Activated CD8-positive, alpha-beta T cell treated with anti-CD3 and anti-CD28 coated beads for 36 hours (primary cell): ENCODE measurements at regions of chr2 and their contacts with region 1.

Region 1: GRCh38 chr2:69914170-69914960 is 544 bp upstream of the MXD1 start:
- DNase-seq: peak; percentile 100
- ATAC-seq: peak; percentile 96
- H3K4me3 Mint-ChIP-seq: peak overlapping the region; percentile 86
- H3K27ac Mint-ChIP-seq: peak overlapping the region; percentile 92
- H3K4me1 Mint-ChIP-seq: peaks cover 37% of the 10 kb centered on the region
- H3K27me3 Mint-ChIP-seq: no peaks in the 10 kb centered on the region
- CTCF ChIP-seq: no peak

Region 2: DNA sequence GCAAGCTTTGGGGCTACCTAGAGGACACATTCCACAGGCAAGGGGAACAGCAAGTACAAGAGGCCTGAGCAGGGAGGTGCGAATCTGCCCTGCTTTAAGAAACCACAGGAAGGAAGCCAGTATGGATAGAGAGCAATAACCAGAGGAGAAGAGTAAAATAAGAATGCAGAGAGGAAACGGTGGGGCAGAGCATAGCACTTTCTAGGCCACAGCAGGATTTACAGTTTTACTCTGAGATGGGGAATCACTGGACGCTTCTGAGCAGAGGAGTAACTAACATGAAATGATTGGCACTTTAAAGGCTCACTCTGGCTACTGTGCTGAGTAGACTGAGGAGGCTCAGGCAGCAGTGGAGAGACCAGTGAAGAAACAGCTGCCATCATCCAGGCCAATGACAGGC is 294.6 kb before region 1 on chr2:
- CTCF ChIA-PET with region 1: no interaction called
- POLR2A ChIA-PET with region 1: no interaction called
- intact Hi-C with region 1: no loop called
- DNase-seq: peak; percentile 37
- ATAC-seq: peak; percentile 64
- H3K4me3 Mint-ChIP-seq: no peak overlapping the region
- H3K27ac Mint-ChIP-seq: no peak overlapping the region
- H3K4me1 Mint-ChIP-seq: peaks cover 31% of the 10 kb centered on the region
- H3K27me3 Mint-ChIP-seq: no peaks in the 10 kb centered on the region
- CTCF ChIP-seq: no peak

Region 3: GRCh38 chr2:69643602-69644505 is 270.5 kb before region 1 on chr2 and contains the start of gene AAK1:
- CTCF ChIA-PET with region 1: no interaction called
- POLR2A ChIA-PET with region 1: no interaction called
- intact Hi-C with region 1: no loop called
- DNase-seq: peak; percentile 91
- ATAC-seq: peak; percentile 58
- H3K4me3 Mint-ChIP-seq: peak within 1 kb of the TSS; percentile 85
- H3K27ac Mint-ChIP-seq: peak within 1 kb of the TSS; percentile 96
- H3K4me1 Mint-ChIP-seq: peaks cover 50% of the 10 kb centered on the region
- H3K27me3 Mint-ChIP-seq: no peaks in the 10 kb centered on the region
- CTCF ChIP-seq: no peak
- total RNA-seq, gene AAK1: 114 to 115 TPM

Region 4: DNA sequence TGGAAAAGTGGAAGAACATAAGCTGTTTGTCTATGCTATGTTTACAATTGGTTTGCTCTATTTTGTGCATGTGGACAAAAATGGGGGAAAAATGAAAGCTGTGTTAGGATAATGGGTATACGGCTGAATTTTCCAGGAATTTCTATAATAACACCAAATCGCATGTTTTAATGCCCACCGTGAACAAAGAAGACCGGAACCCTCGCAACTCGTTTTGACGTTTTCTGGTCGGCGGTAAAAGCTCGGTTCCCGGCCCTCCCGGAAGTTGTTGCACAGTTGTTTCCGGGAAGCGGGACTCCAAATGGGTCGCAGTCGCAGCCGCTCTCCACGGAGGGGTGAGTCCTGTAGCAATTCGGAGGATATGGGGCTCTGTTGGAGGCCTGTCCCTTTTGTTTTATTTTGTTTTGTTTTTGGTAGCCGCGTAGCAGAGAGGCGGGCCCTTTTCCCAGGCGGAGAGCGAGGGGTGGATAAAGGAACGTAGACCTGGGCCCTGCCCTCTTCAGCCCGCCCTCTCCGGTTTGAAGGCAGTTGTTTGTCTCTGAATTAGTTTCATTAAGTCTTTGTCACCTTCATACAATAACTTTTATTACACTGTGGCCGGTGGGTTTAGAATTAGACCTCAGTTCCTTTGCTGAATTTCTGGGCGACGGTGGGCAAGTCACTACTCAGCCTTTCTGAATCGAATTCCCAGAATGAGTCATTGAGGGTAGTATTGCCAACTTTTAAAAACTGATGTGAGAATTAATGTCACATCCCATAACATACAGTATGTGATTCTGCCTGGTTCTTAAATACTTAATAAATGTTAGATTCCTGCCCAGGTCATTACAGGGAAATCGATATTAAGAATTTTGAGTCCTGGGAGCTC is 20.4 kb before region 1 on chr2 and contains the start of gene SNRNP27:
- CTCF ChIA-PET with region 1: interaction called, 42 read pairs
- POLR2A ChIA-PET with region 1: interaction called, 29 read pairs
- intact Hi-C with region 1: no loop called
- DNase-seq: peak; percentile 87
- ATAC-seq: peak; percentile 92
- H3K4me3 Mint-ChIP-seq: peak within 1 kb of the TSS; percentile 99
- H3K27ac Mint-ChIP-seq: peak within 1 kb of the TSS; percentile 98
- H3K4me1 Mint-ChIP-seq: peaks cover 34% of the 10 kb centered on the region
- H3K27me3 Mint-ChIP-seq: no peaks in the 10 kb centered on the region
- CTCF ChIP-seq: no peak
- total RNA-seq, gene SNRNP27: 54.3 to 57.9 TPM

Region 5: DNA sequence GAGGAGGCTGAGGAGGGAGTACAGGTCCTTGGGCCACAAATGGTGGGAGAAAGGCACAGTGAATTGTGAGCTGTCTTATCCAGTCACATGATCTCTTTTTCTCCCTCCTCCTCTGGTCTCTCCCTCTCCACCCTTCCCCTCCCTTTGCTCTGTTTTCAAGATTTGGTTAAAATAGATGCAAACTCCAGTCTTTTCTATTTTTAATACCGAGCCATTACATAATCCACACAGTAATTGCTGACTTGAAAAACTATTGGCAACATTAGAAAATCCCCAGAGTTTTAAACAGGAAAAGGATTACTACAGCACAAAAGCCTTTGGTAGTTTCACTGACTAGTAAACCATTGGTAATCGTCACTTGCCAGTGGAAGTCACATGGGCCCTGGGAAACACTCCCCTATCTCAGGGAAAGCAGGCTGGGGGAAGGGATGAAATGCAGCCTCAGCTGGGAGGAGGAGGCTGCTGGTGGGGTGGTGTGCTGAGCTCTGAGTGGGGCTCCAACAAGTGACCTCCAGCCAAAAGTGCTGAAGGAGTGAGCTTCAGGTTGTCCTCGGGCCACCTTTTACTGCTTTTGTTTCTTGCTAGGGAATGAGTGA is 115.5 kb after region 1 on chr2:
- CTCF ChIA-PET with region 1: no interaction called
- POLR2A ChIA-PET with region 1: no interaction called
- intact Hi-C with region 1: no loop called
- DNase-seq: no peak
- ATAC-seq: no peak
- H3K4me3 Mint-ChIP-seq: no peak overlapping the region
- H3K27ac Mint-ChIP-seq: no peak overlapping the region
- H3K4me1 Mint-ChIP-seq: peaks cover 7% of the 10 kb centered on the region
- H3K27me3 Mint-ChIP-seq: no peaks in the 10 kb centered on the region
- CTCF ChIP-seq: no peak

Region 6: DNA sequence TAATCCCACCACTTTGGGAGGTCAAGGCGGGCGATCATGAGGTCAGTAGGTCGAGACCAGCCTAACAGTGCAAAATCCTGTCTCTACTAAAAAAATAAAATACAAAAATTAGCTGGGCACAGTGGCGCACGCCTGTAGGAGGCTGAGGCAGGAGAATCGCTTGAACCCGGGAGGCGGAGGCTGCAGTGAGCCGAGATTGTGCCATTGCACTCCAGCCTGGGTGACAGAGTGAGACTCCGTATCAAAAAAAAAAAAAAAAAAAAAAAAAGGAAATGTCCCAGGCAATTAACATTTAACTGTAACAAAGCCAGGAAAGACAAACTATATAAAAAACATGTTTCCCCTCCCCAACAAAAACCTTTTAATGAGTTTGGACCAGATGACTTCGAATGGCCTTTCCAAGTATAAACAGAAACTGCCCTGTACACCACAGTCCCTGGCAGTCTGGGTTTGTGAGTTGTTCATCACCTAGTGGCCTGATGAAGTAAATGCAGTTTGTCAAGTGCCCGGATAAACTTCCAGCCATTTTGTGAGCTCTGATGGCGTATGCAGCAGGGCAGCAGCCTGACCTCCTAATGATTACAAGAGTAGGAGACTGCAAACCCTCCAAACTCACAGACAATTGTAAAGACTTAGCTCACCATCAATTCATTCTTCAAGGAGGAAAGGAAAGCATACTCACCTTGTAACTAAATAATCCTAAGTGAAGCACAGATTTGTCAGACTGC is 156.3 kb after region 1 on chr2:
- CTCF ChIA-PET with region 1: interaction called, 58 read pairs
- POLR2A ChIA-PET with region 1: interaction called, 23 read pairs
- intact Hi-C with region 1: loop called (anchors 5 kb)
- DNase-seq: peak; percentile 74
- ATAC-seq: peak; percentile 72
- H3K4me3 Mint-ChIP-seq: peak overlapping the region; percentile 40
- H3K27ac Mint-ChIP-seq: peak overlapping the region; percentile 87
- H3K4me1 Mint-ChIP-seq: peaks cover 44% of the 10 kb centered on the region
- H3K27me3 Mint-ChIP-seq: no peaks in the 10 kb centered on the region
- CTCF ChIP-seq: peak; percentile 67

Region 7: DNA sequence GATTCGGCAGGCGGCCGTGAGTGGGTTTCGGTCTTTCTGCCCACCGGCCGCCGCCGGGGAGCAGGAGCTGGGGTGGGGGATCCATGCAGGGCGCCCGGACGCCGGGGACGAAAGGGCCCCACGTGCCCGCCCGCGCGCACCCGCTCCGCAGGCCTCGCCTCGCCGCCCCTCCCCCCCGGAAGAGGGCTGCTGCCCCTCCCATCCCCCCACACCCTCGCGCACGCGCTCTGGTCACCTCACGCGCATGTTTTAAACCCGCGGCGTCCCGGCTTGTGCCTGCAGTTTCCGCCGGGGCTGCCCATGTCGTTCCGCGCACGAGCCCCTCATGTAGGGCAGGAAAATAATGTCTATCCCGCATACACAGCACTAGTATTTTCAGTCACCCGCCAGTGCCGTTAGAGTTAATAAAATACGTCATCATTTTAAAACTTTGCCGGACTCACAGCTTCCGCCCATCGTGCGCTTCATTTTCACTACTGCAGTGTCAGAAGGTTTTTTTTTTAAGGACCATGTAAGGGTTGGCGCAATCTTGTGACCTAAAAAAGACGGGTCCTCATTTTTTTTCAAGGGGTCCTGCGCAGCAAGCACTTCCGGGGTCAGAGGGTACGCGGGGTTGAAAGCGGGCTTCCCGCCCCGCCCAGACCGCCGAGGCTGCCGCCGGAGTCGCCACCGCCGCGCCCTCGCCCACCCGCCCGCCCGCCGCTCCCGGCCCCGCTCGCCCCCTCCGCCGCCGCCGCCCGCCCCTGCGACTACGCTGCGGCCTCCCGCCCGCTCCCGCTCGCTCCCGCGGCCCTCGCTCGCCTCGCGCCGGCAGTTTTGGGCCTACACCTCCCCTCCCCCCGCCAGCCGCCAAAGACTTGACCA is 172.7 kb after region 1 on chr2 and contains the start of gene PCBP1:
- CTCF ChIA-PET with region 1: interaction called, 11 read pairs
- POLR2A ChIA-PET with region 1: interaction called, 57 read pairs
- intact Hi-C with region 1: loop called (anchors 5 kb)
- DNase-seq: peak; percentile 96
- ATAC-seq: peak; percentile 60
- H3K4me3 Mint-ChIP-seq: peak within 1 kb of the TSS; percentile 99
- H3K27ac Mint-ChIP-seq: peak within 1 kb of the TSS; percentile 98
- H3K4me1 Mint-ChIP-seq: peaks cover 53% of the 10 kb centered on the region
- H3K27me3 Mint-ChIP-seq: no peaks in the 10 kb centered on the region
- CTCF ChIP-seq: no peak
- total RNA-seq, gene PCBP1: 470 to 489 TPM

Region 8: GRCh38 chr2:70132244-70133126 is 218.1 kb after region 1 on chr2:
- CTCF ChIA-PET with region 1: interaction called, 15 read pairs
- POLR2A ChIA-PET with region 1: interaction called, 25 read pairs
- intact Hi-C with region 1: no loop called
- DNase-seq: peak; percentile 65
- ATAC-seq: peak; percentile 46
- H3K4me3 Mint-ChIP-seq: peak overlapping the region; percentile 86
- H3K27ac Mint-ChIP-seq: peak overlapping the region; percentile 99
- H3K4me1 Mint-ChIP-seq: peaks cover 61% of the 10 kb centered on the region
- H3K27me3 Mint-ChIP-seq: no peaks in the 10 kb centered on the region
- CTCF ChIP-seq: no peak

Region 9: DNA sequence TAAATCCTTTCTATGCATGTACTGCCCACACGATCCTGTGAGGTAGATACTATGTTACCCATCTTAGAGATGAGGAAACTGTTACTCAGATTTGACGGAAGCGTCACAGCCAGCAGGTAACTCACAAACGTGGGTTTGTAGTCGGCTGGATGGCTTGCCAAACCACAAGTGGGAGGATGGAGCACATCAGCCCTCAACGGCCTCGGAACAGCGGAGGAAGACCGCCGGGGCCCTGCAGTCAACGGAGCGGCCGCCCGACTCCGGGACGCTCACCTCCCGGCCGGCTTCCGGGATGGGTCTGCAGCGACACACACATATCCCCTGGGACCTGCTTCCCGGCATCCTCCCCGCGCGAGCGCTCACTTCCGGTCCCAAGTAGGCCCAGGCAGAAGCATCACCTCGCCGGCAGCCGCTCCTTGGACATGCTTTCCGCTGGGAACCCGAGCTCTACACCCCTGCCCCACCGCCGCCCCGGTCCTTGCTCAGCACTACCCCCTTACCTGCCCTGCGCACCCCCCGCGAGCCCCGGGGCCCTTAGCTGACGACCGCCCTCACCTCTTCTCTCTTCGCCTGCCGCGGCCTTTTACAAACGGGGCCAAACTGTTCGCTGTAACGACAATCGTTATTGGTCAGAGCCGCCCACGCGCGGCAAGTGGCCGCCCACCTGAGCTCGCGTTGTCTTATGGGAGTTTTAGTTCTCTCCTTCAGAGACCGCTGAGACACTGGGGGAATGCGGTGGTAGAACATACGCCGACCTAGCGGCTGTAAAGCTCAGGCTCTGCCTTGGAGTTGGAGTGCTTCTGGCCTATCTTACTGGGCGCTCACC is 276.3 kb after region 1 on chr2 and contains the start of gene C2orf42:
- CTCF ChIA-PET with region 1: interaction called, 10 read pairs
- POLR2A ChIA-PET with region 1: interaction called, 25 read pairs
- intact Hi-C with region 1: no loop called
- DNase-seq: peak; percentile 98
- ATAC-seq: peak; percentile 85
- H3K4me3 Mint-ChIP-seq: peak within 1 kb of the TSS; percentile 87
- H3K27ac Mint-ChIP-seq: peak within 1 kb of the TSS; percentile 99
- H3K4me1 Mint-ChIP-seq: peaks cover 19% of the 10 kb centered on the region
- H3K27me3 Mint-ChIP-seq: no peaks in the 10 kb centered on the region
- CTCF ChIP-seq: no peak
- total RNA-seq, gene C2orf42: 19.2 to 24.6 TPM

Region 10: GRCh38 chr2:70248181-70248847 is 333.9 kb after region 1 on chr2 and contains the start of gene TIA1:
- CTCF ChIA-PET with region 1: no interaction called
- POLR2A ChIA-PET with region 1: no interaction called
- intact Hi-C with region 1: loop called (anchors 5 kb)
- DNase-seq: peak; percentile 100
- ATAC-seq: peak; percentile 98
- H3K4me3 Mint-ChIP-seq: peak within 1 kb of the TSS; percentile 93
- H3K27ac Mint-ChIP-seq: peak within 1 kb of the TSS; percentile 97
- H3K4me1 Mint-ChIP-seq: peaks cover 26% of the 10 kb centered on the region
- H3K27me3 Mint-ChIP-seq: peaks cover 2% of the 10 kb centered on the region
- CTCF ChIP-seq: no peak
- total RNA-seq, gene TIA1: 81.8 to 93.8 TPM